ENCODE measurements at regions of chr15 and their contacts with region 1.

Region 1: DNA sequence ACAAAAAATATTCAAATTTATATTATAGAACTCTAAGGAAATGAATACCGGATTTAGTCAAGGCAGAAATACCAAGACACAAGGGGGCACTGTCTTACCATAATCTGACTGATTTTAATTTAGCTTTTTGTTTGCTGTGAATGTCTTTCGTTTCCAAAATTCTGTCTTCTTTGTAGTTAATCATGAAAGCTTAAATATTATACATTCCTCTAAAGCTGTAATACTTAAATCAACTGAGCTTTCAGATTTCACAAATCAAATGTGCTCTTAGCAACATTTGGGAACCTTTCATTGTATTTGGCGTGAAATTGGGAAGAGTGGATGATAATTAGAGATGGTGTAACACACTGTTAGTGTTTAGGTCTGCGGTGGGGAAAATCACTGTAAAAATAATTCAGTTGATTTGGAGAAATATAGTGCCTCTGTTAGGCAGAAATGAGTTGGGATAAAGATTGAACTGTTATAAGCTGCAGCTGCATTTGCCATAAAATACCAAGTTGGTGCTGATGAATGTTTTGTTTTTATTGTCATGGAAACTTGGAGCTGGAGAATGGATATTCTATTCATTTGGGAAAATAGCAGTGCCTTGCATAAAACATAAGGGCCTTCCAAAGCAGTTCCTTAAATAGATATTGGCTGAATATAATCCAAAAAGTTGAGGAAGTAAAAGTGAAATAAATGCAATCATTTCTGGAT is 228.2 kb downstream of the TCF12 start:
- DNase-seq: no peak
- ATAC-seq: no peak
- H3K4me3 Mint-ChIP-seq: no peak overlapping the region
- H3K27ac Mint-ChIP-seq: no peak overlapping the region
- H3K4me1 Mint-ChIP-seq: peaks cover 6% of the 10 kb centered on the region
- H3K27me3 Mint-ChIP-seq: no peaks in the 10 kb centered on the region

Region 2: GRCh38 chr15:57134851-57135250 is 11.8 kb before region 1 on chr15:
- CTCF ChIA-PET with region 1: interaction called, 10 read pairs
- DNase-seq: no peak
- ATAC-seq: no peak
- H3K4me3 Mint-ChIP-seq: no peak overlapping the region
- H3K27ac Mint-ChIP-seq: no peak overlapping the region
- H3K4me1 Mint-ChIP-seq: peaks cover 43% of the 10 kb centered on the region
- H3K27me3 Mint-ChIP-seq: no peaks in the 10 kb centered on the region

Region 3: DNA sequence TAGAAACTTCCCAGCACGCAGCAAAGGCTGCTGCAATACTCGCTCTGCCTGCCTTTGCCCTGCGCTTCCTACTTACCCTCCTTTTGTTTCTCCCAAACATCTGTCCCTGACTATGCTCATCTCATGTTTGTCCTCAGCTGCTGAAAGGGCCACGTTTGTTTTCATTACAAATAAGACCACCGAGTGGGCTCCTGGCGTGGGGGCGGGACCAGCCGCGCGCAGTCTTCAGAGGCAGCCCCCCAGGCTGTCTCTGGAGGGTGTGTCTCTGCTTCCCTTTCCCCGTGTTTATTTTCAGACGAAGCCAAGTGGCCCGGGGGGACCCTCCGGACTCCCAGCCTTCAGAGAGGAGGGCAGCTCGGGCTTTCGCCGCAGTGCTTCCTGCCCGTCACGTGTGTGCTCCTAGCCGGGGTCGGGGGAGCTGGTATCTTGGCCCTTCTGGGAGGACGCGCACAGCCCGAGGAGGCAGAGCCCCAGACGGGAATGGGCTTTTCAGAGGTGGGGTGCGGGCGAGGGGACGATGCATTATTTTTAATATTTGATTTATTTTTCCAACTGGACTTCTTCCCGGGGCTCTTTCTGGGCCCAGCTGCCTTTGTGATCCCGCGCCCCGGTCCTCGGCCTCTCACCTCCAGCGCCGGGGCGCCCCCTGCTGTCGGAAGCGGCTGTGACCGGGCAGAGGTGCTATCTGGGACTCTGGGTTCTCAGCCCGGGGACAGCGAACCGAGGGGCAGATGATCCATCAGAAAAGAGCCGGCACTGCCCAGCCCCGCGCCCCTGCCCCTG is 159.7 kb after region 1 on chr15:
- CTCF ChIA-PET with region 1: interaction called, 47 read pairs
- DNase-seq: peak; percentile 83
- ATAC-seq: peak; percentile 94
- H3K4me3 Mint-ChIP-seq: peak overlapping the region; percentile 34
- H3K27ac Mint-ChIP-seq: no peak overlapping the region
- H3K4me1 Mint-ChIP-seq: peaks cover 3% of the 10 kb centered on the region
- H3K27me3 Mint-ChIP-seq: peaks cover 8% of the 10 kb centered on the region